A673 (cell line): ENCODE measurements at regions of chr6 and their contacts with region 1.

Region 1: DNA sequence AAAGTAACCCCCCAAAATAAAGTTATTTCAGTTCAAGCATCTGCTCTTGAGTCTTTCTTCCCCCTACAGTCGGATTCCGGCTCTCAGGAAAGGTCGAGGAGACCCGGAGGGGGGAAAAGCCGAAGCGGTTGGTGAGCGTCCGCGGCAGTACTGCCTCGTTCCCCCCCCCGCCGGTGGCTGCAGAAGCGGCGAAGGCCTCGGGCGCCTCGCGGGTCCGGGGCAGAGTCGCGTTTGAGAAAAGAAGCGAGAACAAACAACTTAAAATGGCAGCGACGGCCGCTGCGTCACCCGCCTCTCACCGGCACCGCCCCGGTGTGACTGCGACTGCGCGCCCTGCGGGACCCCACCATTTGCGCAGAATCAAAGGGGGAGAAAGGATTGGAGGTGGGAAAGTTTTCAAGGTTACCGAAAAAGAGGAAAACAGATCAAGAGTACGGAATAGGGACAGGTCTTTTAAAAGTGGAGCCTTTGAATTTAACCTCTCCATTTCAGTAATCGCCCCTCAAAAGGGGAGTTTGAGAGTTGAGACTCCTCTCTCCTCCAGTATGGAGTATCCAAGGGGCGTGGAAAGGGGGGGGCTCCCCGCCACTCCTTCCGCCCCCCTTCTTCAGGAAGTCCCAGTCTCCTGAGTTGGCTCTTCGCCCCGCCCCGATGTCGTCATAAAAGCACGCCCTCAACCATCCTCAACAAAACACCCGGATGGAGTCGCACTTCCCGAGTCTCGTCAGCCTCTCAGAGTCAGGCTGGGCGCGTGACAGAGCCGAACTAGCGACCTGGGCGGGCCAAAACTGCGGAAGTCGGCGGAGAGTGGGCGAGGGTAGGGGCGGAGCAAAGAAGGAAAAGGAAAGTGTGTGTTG is 1.9 kb upstream of the C6orf62 start:
- DNase-seq: peak; percentile 100
- H3K4me3 ChIP-seq: peak overlapping the region; percentile 81
- H3K27ac ChIP-seq: peak overlapping the region; percentile 94
- H3K4me1 ChIP-seq: peaks cover 11% of the 10 kb centered on the region
- H3K27me3 ChIP-seq: no peaks in the 10 kb centered on the region
- CTCF ChIP-seq: no peak

Region 2: GRCh38 chr6:24019830-24020229 is 701.0 kb before region 1 on chr6:
- CTCF ChIA-PET with region 1: no interaction called
- POLR2A ChIA-PET with region 1: interaction called, 14 read pairs
- intact Hi-C with region 1: no loop called
- DNase-seq: peak; percentile 43
- H3K4me3 ChIP-seq: no peak overlapping the region
- H3K27ac ChIP-seq: no peak overlapping the region
- H3K4me1 ChIP-seq: no peaks in the 10 kb centered on the region
- H3K27me3 ChIP-seq: peaks cover 21% of the 10 kb centered on the region
- CTCF ChIP-seq: no peak

Region 3: DNA sequence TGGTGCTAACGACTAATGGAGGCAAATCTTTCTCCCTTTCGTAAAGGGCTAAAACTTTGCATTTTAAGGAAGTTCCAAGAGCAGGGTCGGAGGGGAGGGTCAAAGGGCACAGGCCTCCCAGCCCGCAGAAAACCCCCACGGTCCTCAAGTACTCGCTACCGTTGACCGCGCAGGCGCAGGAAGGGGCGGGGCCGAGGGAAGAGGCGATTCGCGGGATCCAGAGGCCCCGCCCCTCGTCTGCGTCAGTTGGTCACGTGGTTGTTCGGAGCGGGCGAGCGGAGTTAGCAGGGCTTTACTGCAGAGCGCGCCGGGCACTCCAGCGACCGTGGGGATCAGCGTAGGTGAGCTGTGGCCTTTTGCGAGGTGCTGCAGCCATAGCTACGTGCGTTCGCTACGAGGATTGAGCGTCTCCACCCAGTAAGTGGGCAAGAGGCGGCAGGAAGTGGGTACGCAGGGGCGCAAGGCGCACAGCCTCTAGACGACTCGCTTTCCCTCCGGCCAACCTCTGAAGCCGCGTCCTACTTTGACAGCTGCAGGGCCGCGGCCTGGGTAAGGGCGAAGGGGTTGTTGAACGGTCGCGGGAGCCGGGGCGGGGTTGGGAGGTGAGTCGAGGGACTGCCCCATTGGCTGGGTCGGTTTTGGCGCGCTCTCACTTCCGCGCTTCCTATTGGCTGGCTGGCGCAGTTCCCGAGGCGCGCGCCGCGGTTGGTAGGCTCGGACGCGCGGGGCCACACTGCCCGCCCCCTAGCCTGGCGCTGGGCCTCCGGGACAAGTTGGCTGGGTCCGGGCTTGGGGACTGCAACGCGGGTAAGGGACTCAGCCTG is 54.1 kb after region 1 on chr6 and contains the start of gene GMNN:
- CTCF ChIA-PET with region 1: no interaction called
- POLR2A ChIA-PET with region 1: no interaction called
- intact Hi-C with region 1: loop called (anchors 2 kb)
- DNase-seq: peak; percentile 98
- H3K4me3 ChIP-seq: peak within 1 kb of the TSS; percentile 76
- H3K27ac ChIP-seq: peak within 1 kb of the TSS; percentile 99
- H3K4me1 ChIP-seq: peaks cover 10% of the 10 kb centered on the region
- H3K27me3 ChIP-seq: no peaks in the 10 kb centered on the region
- CTCF ChIP-seq: no peak
- total RNA-seq, gene GMNN: 100 and 111 TPM in 2 replicates

Region 4: DNA sequence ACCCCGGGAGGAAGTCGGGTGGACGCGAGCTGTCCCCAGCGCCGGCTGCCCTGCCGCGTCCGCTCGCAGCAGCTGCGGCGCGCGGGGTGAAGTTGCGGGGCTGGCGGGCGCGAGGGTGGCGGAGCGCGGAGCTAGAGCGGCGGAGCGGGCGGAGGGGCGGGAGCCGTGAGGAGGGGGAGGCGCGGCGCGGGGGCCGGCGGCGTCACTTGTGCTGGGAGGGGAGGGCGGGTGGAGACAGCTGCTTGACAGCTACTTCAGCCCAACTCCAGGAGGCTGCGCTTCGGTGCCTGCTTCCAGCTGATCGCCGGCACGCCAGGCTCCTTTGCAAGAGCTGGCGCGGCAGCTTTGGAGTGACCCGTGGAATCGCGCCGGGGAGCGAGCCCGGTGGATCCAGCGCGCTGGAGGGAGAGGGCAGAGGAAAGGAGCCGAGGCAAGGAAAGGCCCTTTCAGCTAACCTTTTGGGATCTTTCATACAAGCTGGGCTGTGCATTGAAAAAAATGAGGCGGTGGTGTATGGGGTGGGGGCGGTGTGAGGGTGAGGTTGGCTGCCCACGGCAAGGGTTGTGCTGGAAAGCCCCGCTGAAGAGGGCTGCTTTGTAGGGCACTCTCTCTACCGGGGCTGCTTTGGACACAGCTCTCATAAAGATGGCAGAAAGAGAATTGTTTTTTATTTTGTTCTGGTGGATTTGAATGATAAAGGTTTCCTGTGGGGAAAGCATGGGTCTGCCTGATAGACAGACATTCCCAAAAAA is 190.3 kb after region 1 on chr6:
- CTCF ChIA-PET with region 1: no interaction called
- POLR2A ChIA-PET with region 1: no interaction called
- intact Hi-C with region 1: no loop called
- DNase-seq: peak; percentile 50
- H3K4me3 ChIP-seq: peak overlapping the region; percentile 51
- H3K27ac ChIP-seq: no peak overlapping the region
- H3K4me1 ChIP-seq: peaks cover 4% of the 10 kb centered on the region
- H3K27me3 ChIP-seq: peaks cover 41% of the 10 kb centered on the region
- CTCF ChIP-seq: no peak

Region 5: DNA sequence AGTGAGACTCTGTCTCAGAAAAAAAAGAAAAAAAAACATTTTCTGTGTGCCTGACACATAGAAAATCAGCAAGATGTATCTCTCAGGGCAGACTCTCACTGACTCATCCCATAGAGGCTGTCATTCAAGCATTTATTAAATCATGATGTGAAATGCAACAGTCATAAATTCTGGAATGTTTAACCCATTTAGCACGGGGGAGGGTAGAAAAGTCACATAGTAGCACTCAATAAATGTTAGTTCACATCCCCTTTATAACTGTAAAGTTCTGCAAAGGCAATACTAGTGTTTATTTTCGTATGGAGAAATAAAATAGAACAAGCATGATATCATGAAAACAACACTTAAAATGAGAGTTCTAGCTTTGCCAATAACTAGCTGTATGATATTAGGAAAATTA is 542.8 kb after region 1 on chr6:
- CTCF ChIA-PET with region 1: no interaction called
- POLR2A ChIA-PET with region 1: no interaction called
- intact Hi-C with region 1: no loop called
- DNase-seq: peak; percentile 57
- H3K4me3 ChIP-seq: no peak overlapping the region
- H3K27ac ChIP-seq: no peak overlapping the region
- H3K4me1 ChIP-seq: peaks cover 13% of the 10 kb centered on the region
- H3K27me3 ChIP-seq: no peaks in the 10 kb centered on the region
- CTCF ChIP-seq: no peak